Left cardiac atrium (tissue), 4 donors: ENCODE measurements at regions of chr16 and their contacts with region 1.

Region 1: DNA sequence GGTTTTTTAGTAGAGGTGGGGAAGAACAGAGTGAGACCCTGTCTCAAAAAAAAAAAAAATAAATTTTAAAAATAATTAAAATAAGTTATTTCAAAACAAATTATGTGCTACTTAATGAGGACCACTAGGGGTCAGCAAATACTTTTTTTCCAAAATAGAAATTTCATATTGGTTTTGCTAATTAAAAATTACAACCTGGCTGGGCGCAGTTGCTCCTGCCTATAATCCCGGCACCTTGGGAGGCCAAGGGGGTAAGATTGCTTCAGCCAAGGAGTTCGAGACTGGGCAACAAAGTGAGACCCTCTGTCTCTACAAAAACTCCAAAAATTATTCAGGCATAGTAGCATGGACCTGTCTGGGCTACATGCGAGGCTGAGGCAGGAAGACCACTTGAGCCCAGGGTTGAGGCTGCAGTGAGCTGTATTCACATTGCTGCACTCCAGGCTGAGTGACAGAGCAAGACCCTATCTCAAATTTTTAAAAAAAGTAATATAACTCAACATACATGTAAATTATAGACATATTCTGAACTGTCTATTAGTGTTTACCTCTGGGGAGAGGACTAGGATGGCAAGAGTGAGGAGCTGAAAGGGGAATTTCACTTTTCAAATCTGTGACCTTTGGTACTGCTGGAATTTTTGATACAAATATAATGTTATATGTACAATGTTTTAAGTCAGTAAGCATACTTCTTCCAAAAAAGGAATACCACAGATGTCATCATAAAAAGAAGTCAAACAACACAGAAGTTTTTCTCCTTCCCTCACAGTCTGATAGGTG is 8.1 kb downstream of the MEIOB start:
- DNase-seq: no peak
- ATAC-seq: no peak

Region 2: GRCh38 chr16:1741553-1742165 is 122.2 kb before region 1 on chr16:
- intact Hi-C with region 1: no loop called
- DNase-seq: no peak
- ATAC-seq: peak in 1 of 2 donors; percentile 14

Region 3: GRCh38 chr16:1929578-1930337 is 65.9 kb after region 1 on chr16:
- intact Hi-C with region 1: loop called in 1 of 2 experiments (anchors 2 kb)
- DNase-seq: peak; percentile 92
- ATAC-seq: peak; percentile 95 to 97